Cardiac septum (tissue), 1 donor: ENCODE measurements at regions of chr11 and their contacts with region 1.

Region 1: GRCh38 chr11:64846998-64847666 is 2.7 kb upstream of the CDC42BPG start:
- DNase-seq: peak; percentile 96

Region 2: GRCh38 chr11:64894070-64894796 is 47.1 kb after region 1 on chr11:
- intact Hi-C with region 1: loop called (anchors 1 kb)
- DNase-seq: peak; percentile 95

Region 3: GRCh38 chr11:65013692-65014145 is 166.6 kb after region 1 on chr11:
- intact Hi-C with region 1: loop called (anchors 5 kb)
- DNase-seq: peak; percentile 96

Region 4: GRCh38 chr11:65078151-65078550 is 231.0 kb after region 1 on chr11:
- intact Hi-C with region 1: loop called (anchors 10 kb)
- DNase-seq: no peak

Region 5: GRCh38 chr11:65117216-65118096 is 270.3 kb after region 1 on chr11 and contains the start of gene ZNHIT2:
- intact Hi-C with region 1: loop called (anchors 2 kb)
- DNase-seq: peak; percentile 100
- total RNA-seq, gene ZNHIT2: 5.5 TPM